AG04450 (cell line): ENCODE measurements at regions of chr10 and their contacts with region 1.

Region 1: GRCh38 chr10:35613597-35614226 is 8.6 kb downstream of the GJD4 start:
- DNase-seq: no peak
- H3K4me3 ChIP-seq: no peak overlapping the region
- H3K27ac ChIP-seq: no peak overlapping the region
- H3K27me3 ChIP-seq: peaks cover 10% of the 10 kb centered on the region
- CTCF ChIP-seq: peak; percentile 61

Region 2: GRCh38 chr10:36771725-36772124 is 1158.0 kb after region 1 on chr10:
- CTCF ChIA-PET with region 1: interaction called, 13 read pairs
- POLR2A ChIA-PET with region 1: no interaction called
- DNase-seq: no peak
- H3K4me3 ChIP-seq: no peak overlapping the region
- H3K27ac ChIP-seq: no peak overlapping the region
- H3K27me3 ChIP-seq: no peaks in the 10 kb centered on the region
- CTCF ChIP-seq: no peak

Region 3: GRCh38 chr10:36779234-36779846 is 1165.6 kb after region 1 on chr10:
- CTCF ChIA-PET with region 1: interaction called, 58 read pairs
- POLR2A ChIA-PET with region 1: no interaction called
- DNase-seq: peak; percentile 64
- H3K4me3 ChIP-seq: no peak overlapping the region
- H3K27ac ChIP-seq: no peak overlapping the region
- H3K27me3 ChIP-seq: no peaks in the 10 kb centered on the region
- CTCF ChIP-seq: peak; percentile 86

Region 4: GRCh38 chr10:36880898-36881297 is 1267.2 kb after region 1 on chr10:
- CTCF ChIA-PET with region 1: interaction called, 72 read pairs
- POLR2A ChIA-PET with region 1: no interaction called
- DNase-seq: peak; percentile 8
- H3K4me3 ChIP-seq: no peak overlapping the region
- H3K27ac ChIP-seq: no peak overlapping the region
- H3K27me3 ChIP-seq: peaks cover 2% of the 10 kb centered on the region
- CTCF ChIP-seq: peak; percentile 78